Transverse colon (tissue), 4 donors: ENCODE measurements at regions of chr4 and their contacts with region 1.

Region 1: GRCh38 chr4:112751447-112751846 is 114.5 kb downstream of the LARP7 start:
- DNase-seq: no peak
- H3K4me3 ChIP-seq: no peak overlapping the region
- H3K27ac ChIP-seq: no peak overlapping the region
- H3K4me1 ChIP-seq: no peaks in the 10 kb centered on the region
- H3K27me3 ChIP-seq: no peaks in the 10 kb centered on the region
- CTCF ChIP-seq: no peak
- EP300 ChIP-seq: no peak
- POLR2A ChIP-seq: no peak

Region 2: DNA sequence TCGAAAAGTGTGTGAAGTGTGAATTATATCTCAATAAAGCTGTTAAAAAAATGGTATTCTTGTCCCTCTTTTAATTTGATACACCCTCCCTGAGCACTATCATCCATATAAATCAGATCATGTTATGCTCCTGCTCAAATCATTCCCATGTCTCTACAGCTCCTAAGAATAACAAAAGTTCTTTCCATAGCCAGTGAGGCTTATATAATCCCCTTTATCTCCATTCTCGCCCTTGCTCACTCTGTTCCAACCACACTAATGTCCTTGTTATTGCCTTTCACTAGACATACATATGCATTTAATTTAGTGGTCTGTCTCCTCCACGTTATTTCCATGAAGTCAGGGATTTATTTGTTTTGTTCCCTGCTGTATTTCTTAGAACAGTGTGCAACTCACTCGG is 125.2 kb before region 1 on chr4:
- in situ Hi-C with region 1: loop called in 1 of 4 experiments (anchors 10 kb)
- intact Hi-C with region 1: loop called (anchors 10 kb)
- DNase-seq: no peak
- H3K4me3 ChIP-seq: no peak overlapping the region
- H3K27ac ChIP-seq: no peak overlapping the region
- H3K4me1 ChIP-seq: no peaks in the 10 kb centered on the region
- H3K27me3 ChIP-seq: no peaks in the 10 kb centered on the region
- CTCF ChIP-seq: no peak
- EP300 ChIP-seq: no peak
- POLR2A ChIP-seq: no peak